ENCODE measurements at regions of chr2 and their contacts with region 1.

Region 1: GRCh38 chr2:234288974-234289455 is 207.9 kb downstream of the ARL4C start:
- DNase-seq: peak; percentile 54
- CTCF ChIP-seq: peak; percentile 87

Region 2: GRCh38 chr2:234300932-234301823 is 12.2 kb after region 1 on chr2:
- CTCF ChIA-PET with region 1: interaction called, 35 read pairs
- POLR2A ChIA-PET with region 1: no interaction called
- DNase-seq: no peak
- CTCF ChIP-seq: no peak

Region 3: DNA sequence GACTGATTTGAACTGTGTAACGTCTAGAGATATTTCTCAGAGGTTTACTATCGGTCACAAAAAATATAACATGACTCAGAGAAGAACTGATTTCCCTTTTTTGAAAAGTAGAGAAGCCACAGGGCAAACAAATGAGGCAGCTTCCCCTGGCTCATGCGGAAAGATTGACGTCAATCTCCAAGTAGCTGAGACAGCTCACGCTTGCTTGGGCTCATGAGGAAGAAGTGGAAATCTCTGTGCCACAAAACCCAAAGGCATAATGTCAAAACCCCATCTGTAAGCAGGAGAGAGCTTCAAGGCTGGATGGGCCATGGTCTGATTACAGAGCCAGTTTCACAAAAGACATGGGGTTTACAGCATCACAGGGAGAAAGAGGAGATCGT is 19.8 kb after region 1 on chr2:
- CTCF ChIA-PET with region 1: interaction called, 11 read pairs
- POLR2A ChIA-PET with region 1: no interaction called
- DNase-seq: peak; percentile 52
- CTCF ChIP-seq: no peak

Region 4: GRCh38 chr2:234500394-234501006 is 211.5 kb after region 1 on chr2:
- CTCF ChIA-PET with region 1: interaction called, 35 read pairs
- POLR2A ChIA-PET with region 1: interaction called, 4 read pairs
- DNase-seq: peak; percentile 61
- CTCF ChIP-seq: peak; percentile 58

Region 5: DNA sequence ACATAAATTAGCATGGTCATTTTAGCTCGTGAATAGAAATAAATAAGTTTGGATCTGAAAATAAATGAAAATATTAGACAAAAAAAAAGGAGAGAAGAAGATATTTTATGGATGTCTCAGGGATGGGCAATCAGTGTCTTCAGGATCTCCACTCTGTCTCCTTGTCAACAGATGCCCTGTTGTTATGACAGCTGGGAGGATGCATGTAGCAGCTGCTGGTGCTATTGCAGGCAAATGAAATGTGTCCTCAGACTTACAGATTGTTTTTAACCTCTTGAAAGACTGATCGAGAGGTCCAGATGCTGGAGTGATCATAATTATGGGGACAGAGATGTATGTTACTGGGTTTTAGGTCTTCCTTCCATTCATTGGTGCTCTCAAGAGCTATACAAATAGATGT is 232.5 kb after region 1 on chr2:
- CTCF ChIA-PET with region 1: no interaction called
- POLR2A ChIA-PET with region 1: no interaction called
- DNase-seq: no peak
- CTCF ChIP-seq: no peak